ENCODE measurements at regions of chr17 and their contacts with region 1.

Region 1: DNA sequence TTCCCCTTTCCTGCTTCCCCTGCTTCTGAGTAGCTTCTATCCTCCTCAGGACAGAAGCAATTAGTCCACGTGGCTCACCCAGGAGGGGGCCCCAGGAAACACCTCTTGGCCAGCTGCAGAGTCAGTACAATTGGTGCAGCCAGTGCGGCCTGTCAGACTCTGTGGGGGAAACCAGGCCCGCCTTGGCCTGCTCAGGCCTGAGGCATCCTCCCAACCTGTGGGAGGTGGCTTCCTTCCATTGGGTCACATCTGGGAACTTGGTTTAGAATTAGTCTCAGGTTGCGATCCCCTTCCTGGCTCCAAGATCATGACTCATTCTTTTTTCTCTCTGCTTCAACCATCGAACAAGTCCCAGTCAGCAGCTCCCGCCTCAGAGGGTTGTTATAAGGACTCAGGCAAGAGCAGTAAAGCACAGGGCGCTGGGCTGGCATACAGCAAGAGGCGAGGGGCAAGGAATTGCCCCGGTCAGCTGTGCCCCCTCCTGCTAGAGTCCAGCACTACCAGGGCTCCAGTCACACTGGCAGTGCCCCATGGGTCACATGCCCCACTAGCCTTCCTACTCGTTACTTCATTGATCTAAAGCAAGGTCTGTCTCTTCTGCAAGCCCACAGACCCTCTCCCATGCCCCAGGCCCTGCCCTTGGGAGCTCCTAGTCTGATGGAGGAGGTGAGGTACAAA is 8.1 kb upstream of the EPX start:
- DNase-seq: peak in 1 of 2 experiments; percentile 23
- H3K4me3 ChIP-seq: no peak overlapping the region
- H3K27ac ChIP-seq: peak overlapping the region; percentile 7; the same call in 1 of the 2 replicates
- H3K4me1 ChIP-seq: peaks cover 0 to 5% (median 0%) of the 10 kb centered on the region in 4 experiments; a peak in 1 of 7 replicates
- H3K27me3 ChIP-seq: peaks cover 0 to 5% (median 0%) of the 10 kb centered on the region in 4 experiments; a peak in 1 of 7 replicates
- CTCF ChIP-seq: no peak
- EP300 ChIP-seq: no peak
- POLR2A ChIP-seq: no peak
- RAD21 ChIP-seq: no peak

Region 2: GRCh38 chr17:58172369-58173071 is 11.9 kb before region 1 on chr17:
- CTCF ChIA-PET with region 1: interaction called, 10 read pairs
- POLR2A ChIA-PET with region 1: interaction called, 3 read pairs
- DNase-seq: no peak
- H3K4me3 ChIP-seq: no peak overlapping the region
- H3K27ac ChIP-seq: no peak overlapping the region
- H3K4me1 ChIP-seq: no peaks in the 10 kb centered on the region
- H3K27me3 ChIP-seq: peaks cover 0 to 3% (median 2%) of the 10 kb centered on the region in 4 experiments; a peak in 1 of 7 replicates
- CTCF ChIP-seq: peak in 2 of 3 experiments; percentile 73 to 77; a peak in 3 of 4 replicates
- EP300 ChIP-seq: no peak
- POLR2A ChIP-seq: no peak
- RAD21 ChIP-seq: peak; percentile 87 to 92